IMR-90 (cell line): ENCODE measurements at regions of chr2 and their contacts with region 1.

Region 1: GRCh38 chr2:84925724-84926376 is 20.4 kb downstream of the TMSB10 start:
- DNase-seq: peak; percentile 84
- ATAC-seq: peak; percentile 68
- H3K4me3 ChIP-seq: peak overlapping the region; percentile 31
- H3K27ac ChIP-seq: peak overlapping the region; percentile 2
- H3K4me1 ChIP-seq: peaks cover 6% of the 10 kb centered on the region; the same call in 1 of the 2 replicates
- H3K27me3 ChIP-seq: no peaks in the 10 kb centered on the region
- CTCF ChIP-seq: peak; percentile 86
- POLR2A ChIP-seq: peak; percentile 26; the same call in 1 of the 2 replicates
- RAD21 ChIP-seq: peak; percentile 74

Region 2: DNA sequence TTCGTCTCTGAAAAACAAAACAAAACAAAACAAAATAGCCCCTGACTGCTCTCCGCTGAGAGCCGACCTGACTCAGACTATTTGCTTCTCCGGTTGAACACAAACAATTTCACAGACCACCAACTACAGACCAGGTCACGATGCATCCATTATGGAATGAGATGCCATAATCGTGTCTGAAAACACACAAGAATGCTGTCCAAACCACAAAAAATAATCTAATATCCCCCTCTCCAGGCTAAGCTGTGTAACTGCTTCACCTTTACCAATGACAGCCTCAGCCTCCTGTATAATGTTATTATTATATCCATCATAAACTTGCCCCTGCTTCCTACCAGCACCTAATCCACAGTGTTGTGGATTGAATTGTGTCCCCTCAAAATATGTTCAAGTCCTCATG is 294.8 kb before region 1 on chr2:
- CTCF ChIA-PET with region 1: no interaction called
- POLR2A ChIA-PET with region 1: no interaction called
- dilution Hi-C with region 1: no loop called
- in situ Hi-C with region 1: no loop called
- intact Hi-C with region 1: loop called (anchors 5 kb)
- DNase-seq: peak; percentile 53
- ATAC-seq: peak; percentile 97
- H3K4me3 ChIP-seq: no peak overlapping the region
- H3K27ac ChIP-seq: no peak overlapping the region
- H3K4me1 ChIP-seq: no peaks in the 10 kb centered on the region
- H3K27me3 ChIP-seq: peaks cover 7% of the 10 kb centered on the region
- CTCF ChIP-seq: peak; percentile 60
- POLR2A ChIP-seq: no peak
- RAD21 ChIP-seq: peak; percentile 74

Region 3: DNA sequence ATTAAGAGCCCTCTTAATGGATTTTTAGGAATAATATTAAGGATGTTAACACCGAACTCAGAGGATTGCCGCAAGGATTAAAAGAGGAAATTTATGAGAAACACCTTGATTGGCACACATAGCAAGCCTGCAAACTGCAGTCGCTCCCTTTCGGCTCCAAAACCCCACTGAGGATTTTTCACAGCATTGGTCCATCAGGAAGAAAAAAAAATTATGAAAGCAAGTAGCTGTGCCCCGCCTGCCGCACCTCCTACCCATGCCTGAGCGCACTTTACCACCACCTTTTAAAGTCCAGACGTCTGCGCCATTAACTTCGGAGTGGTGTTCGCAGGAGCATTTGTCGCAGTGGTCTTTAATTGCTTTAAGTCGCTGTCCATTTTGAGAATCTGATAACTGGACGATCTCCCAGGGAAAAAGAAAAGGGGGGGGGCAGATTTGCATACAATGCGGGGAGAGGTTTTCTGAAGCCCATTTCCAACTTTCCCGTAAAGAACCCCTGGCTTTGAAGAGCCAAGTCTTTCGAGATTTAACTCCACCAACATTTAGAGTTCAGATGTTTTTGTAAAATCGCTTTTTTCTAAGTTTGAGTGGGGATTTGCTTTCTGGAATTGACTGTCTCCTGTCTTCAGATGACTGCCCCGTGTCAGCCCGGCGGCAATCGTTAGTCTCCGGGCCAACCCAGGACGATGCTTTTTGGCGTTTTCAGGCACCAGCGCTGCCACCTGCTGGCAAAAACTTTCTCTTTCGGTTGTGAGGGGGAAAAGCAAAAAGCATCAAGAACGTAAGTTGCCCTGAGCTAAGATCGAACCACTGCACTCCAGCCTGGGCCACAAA is 44.1 kb before region 1 on chr2:
- CTCF ChIA-PET with region 1: interaction called, 8 read pairs
- POLR2A ChIA-PET with region 1: no interaction called
- dilution Hi-C with region 1: no loop called
- in situ Hi-C with region 1: no loop called
- intact Hi-C with region 1: loop called (anchors 1 kb)
- DNase-seq: peak; percentile 85
- ATAC-seq: peak; percentile 70
- H3K4me3 ChIP-seq: peak overlapping the region; percentile 91
- H3K27ac ChIP-seq: peak overlapping the region; percentile 63
- H3K4me1 ChIP-seq: peaks cover 12% of the 10 kb centered on the region
- H3K27me3 ChIP-seq: no peaks in the 10 kb centered on the region
- CTCF ChIP-seq: peak; percentile 84
- POLR2A ChIP-seq: 0 out of 2 replicates have a peak, but pooled peaks have one; percentile 1
- RAD21 ChIP-seq: peak; percentile 85

Region 4: DNA sequence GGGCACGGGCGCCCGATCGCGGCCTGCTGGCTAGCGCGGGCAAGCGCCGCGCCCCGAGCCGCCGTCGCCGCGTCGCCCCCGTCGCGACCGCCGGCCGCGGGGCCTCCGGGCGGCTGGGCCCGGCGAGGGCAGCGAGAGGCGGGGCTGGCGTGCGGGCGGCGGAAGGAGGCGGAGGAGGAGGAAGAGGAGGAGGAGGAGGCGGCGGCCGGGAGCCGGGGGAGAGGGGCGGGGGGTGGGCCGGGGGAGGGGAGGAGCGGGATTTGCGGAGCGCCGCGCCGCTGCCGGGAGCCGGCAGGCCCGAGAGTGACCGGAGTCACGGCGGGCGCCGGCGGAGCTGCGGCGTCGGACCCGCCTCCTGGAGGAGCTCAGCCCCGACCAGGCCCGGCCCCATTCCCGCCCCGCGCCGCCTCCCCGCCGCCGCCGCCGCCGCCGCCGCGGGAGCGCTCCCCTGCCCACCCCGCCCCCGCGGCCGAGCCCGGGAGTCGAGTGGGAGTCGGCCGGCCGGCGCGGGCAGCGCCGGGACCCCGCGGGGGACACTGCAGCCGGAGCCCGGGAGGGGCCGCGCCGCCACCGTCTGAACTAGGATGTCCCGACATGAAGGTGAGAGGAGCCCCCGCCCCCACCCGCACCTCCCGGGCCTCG is 45.1 kb after region 1 on chr2 and contains the start of gene KCMF1:
- CTCF ChIA-PET with region 1: interaction called, 4 read pairs
- POLR2A ChIA-PET with region 1: interaction called, 3 read pairs
- dilution Hi-C with region 1: no loop called
- in situ Hi-C with region 1: no loop called
- intact Hi-C with region 1: loop called (anchors 2 kb)
- DNase-seq: peak; percentile 74
- ATAC-seq: peak; percentile 84
- H3K4me3 ChIP-seq: peak within 1 kb of the TSS; percentile 100
- H3K27ac ChIP-seq: peak within 1 kb of the TSS; percentile 97
- H3K4me1 ChIP-seq: peaks cover 5% of the 10 kb centered on the region
- H3K27me3 ChIP-seq: no peaks in the 10 kb centered on the region
- CTCF ChIP-seq: no peak
- POLR2A ChIP-seq: peak; percentile 51; the same call in 1 of the 2 replicates
- RAD21 ChIP-seq: no peak
- total RNA-seq, gene KCMF1: 108 and 118 TPM in 2 replicates

Region 5: DNA sequence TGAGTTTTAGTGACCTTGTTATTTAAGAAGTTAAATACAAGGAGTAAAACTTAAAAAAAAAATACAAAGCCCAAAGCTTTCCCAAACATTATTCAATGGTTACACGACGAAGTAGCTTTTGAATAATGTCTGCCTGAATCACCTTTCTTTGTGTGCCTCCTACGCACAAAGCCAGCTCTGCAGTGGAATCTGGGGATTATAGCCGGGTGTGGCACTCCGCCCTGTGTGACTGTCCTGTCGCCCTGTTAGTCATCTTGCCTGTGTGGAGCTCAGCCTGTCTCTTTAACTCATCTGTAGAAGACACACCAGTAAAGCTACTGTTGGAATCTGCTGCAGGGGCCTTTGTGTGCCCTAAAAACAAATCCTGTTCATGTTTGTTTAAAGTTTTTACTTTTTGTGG is 128.0 kb after region 1 on chr2:
- CTCF ChIA-PET with region 1: interaction called, 3 read pairs
- POLR2A ChIA-PET with region 1: no interaction called
- dilution Hi-C with region 1: no loop called
- in situ Hi-C with region 1: no loop called
- intact Hi-C with region 1: loop called (anchors 5 kb)
- DNase-seq: peak; percentile 54
- ATAC-seq: peak; percentile 48
- H3K4me3 ChIP-seq: no peak overlapping the region
- H3K27ac ChIP-seq: no peak overlapping the region
- H3K4me1 ChIP-seq: peaks cover 6% of the 10 kb centered on the region
- H3K27me3 ChIP-seq: no peaks in the 10 kb centered on the region
- CTCF ChIP-seq: no peak
- POLR2A ChIP-seq: no peak
- RAD21 ChIP-seq: no peak